ENCODE measurements at regions of chr11 and their contacts with region 1.

Region 1: DNA sequence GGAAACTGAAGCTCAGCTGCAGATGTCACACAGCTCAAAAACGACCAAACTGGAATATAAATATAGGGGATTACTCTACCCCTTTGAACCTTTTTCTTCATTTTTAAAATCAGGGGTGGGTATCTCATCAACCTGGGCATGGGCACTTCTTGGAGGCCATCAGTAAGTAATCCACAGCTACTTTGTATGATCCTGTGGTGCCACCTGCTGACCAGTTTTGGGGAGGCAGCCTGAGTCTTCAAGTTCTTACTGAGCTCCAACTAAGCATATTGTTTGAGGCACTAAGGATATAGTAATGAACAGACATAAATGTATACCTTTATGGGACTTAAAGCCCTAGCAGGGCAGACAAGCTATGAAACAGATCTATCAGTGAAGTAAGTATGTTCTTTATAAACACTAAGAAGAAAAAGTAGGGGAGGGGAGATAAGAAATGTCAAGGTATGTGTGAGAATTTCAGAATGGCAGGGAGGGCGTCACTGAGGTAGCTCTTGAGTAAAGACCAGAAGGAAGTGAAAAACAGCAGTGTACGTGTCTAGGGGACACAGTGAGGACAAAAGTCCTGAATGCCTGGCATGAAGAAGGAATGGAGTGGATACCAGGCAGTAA is 18.4 kb downstream of the TUB start:
- DNase-seq: peak; percentile 74

Region 2: GRCh38 chr11:7892840-7893254 is 206.5 kb before region 1 on chr11:
- intact Hi-C with region 1: loop called (anchors 10 kb)
- DNase-seq: no peak

Region 3: DNA sequence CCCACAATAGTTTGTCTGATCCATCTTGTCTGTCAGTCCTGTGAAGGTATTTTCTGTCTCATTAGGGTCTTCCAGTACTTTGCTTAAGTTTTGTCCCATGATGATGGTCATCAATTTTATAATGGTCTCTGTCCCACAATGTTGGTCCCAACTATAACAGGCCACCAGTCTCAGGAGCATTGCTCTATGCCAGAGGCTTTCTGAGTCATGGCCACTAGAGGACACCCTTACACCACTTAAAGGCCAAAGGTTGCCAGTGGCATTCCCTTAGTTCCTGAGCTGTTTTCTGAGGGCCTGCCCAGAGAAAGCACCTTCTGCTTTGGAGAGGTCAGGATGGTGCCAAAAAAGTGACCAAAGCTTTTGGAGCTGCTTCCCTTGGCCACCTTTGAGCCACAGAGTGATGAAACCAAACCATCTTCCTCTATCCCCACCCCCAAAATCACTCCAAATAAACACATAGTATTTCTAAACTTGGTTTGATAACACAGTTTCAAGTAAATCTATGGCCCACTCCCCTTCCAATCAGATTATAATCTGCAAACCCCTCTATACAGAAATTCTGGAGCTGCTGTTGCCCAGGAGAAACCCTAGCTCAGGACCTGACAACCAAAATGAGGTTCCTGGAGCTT is 92.9 kb before region 1 on chr11:
- intact Hi-C with region 1: loop called (anchors 1 kb)
- DNase-seq: no peak

Region 4: DNA sequence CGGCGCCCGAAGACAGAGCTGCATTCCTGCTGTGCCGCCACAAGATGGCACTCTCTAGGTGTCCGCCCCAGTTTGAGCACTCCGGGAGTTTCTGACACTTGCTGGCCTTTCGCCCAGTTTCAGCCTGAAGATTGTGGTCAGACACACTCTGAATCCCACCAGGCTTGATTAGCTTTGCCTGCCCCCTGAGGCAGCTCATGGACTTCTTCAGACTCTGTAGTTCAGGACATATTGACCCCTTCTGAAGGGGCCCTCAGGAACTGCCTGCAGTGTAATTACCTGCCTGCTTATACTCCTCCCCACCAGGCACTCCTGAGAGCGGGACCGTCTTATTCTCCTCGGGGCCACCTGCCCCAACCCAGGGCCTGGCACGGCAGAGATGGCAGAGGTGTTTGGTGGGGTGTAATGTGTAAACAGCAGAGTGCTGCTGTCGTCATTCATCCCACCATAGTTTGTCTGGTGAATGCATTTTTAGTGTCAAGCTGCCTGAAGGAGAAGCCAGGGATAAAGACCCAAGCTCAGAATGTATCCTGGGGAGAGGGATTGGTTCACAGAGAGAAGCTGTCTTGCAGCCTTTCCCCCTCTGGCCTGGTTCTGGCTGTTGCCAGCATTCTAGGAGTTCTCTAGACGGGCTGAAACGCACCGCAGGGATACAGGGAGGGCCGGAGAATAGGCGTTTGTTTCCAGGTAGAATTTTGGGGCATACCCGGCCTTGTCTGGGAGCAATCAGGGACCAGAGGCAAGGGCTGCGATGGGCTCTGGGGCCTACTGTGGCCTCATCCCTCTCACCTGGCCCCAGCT is 65.9 kb before region 1 on chr11:
- intact Hi-C with region 1: loop called (anchors 2 kb)
- DNase-seq: peak; percentile 84

Measured in cardiac septum (tissue), 1 donor.